ENCODE measurements at regions of chr19 and their contacts with region 1.

Region 1: GRCh38 chr19:506404-507285 is 652 bp upstream of the TPGS1 start:
- DNase-seq: peak; percentile 97 to 99
- H3K4me3 ChIP-seq: peak overlapping the region; percentile 74 to 93
- H3K27ac ChIP-seq: peak overlapping the region; percentile 92 to 93
- H3K4me1 ChIP-seq: peaks cover 0 to 9% of the 10 kb centered on the region in 2 donors
- H3K27me3 ChIP-seq: no peaks in the 10 kb centered on the region
- CTCF ChIP-seq: peak; percentile 96 to 97 (median 96)

Region 2: DNA sequence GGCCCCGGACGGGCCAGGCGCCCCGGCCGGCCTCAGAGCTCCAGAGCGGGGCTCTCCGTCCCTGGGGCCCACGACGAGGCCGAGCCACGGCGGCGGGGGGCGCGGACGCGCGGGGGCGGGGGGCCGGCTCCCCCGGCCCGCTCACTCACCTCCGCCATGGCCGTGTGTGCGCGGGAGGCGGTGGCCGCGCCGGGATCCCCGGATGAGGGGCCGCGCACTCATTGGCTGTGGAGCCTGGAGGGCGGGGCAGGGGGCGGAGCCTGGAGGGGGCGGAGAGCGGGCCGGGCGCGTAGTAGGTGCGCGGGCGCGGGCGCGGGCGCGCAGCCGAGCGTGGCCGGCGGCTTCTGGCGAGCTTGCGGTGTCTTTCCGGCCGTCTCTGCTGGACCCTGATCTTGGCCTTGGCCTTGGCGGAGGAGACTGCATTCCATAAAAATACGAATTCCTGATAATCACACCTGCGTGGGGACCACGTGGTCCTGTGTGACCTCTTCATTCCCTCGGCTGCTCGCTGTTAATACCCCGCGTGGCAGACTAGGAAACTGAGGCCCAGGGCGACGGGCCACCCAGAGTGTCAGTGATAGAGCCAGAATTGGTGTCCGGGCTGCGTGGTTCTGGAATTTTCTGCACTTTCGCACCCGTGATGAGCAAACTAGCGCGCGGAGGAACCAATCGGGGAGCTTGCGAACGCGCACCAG is 161.9 kb before region 1 on chr19 and contains the start of gene MIER2:
- intact Hi-C with region 1: loop called (anchors 10 kb)
- DNase-seq: peak; percentile 26 to 91
- H3K4me3 ChIP-seq: peak within 1 kb of the TSS; percentile 96 to 98
- H3K27ac ChIP-seq: peak within 1 kb of the TSS; percentile 58 to 76
- H3K4me1 ChIP-seq: peaks cover 5 to 22% of the 10 kb centered on the region in 2 donors
- H3K27me3 ChIP-seq: no peaks in the 10 kb centered on the region
- CTCF ChIP-seq: no peak
- total RNA-seq, gene MIER2: 128 TPM

Region 3: DNA sequence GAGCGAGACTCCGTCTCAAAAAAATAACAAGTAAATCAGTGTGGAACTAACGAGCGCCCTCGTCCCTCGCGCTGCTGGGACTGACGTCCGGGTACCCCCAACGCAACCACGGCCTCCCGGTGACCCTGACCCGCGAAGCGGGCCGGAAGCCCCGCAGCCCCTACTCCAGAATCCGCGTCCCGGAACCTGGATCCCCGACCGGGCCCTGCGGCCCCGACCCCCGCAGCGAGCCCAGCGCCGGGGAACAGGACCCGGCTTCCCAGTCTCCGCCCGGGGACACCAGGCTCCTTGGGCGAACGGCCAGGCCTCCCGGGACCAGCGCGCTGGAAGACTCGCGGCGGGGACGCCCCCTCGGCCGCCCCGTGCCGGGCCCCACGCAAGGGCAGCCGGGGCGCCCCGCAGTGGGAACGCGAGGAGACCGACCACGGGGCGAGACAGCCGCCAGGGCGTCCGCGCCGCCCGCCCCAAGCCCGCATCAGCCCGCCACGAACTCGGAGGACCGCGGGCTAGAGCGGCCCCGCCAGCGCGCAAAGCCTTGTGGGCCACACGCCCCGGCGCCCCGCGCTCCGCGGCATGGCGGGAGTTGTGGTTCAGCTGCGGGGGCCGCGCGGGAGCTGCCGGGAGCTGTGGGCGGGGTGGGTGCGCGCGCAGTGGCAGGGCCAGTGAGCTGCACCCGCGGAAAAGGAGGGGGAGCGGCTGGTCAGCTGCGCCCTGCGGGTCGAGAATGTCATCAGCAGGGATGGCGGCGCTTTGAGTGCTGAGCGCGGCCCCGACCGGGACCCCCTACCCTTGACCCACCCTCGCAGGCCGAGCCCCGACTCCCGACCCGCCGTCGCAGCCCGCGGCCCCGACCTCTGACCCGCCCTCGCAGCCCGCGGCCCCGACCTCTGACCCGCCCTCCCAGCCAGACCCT is 17.9 kb before region 1 on chr19:
- intact Hi-C with region 1: loop called (anchors 1 kb)
- DNase-seq: peak; percentile 66 to 96
- H3K4me3 ChIP-seq: peak overlapping the region; percentile 88 to 99
- H3K27ac ChIP-seq: peak overlapping the region; percentile 81 to 86
- H3K4me1 ChIP-seq: peaks cover 0 to 4% of the 10 kb centered on the region in 2 donors
- H3K27me3 ChIP-seq: no peaks in the 10 kb centered on the region
- CTCF ChIP-seq: peak in 1 of 3 experiments; percentile 3

Region 4: DNA sequence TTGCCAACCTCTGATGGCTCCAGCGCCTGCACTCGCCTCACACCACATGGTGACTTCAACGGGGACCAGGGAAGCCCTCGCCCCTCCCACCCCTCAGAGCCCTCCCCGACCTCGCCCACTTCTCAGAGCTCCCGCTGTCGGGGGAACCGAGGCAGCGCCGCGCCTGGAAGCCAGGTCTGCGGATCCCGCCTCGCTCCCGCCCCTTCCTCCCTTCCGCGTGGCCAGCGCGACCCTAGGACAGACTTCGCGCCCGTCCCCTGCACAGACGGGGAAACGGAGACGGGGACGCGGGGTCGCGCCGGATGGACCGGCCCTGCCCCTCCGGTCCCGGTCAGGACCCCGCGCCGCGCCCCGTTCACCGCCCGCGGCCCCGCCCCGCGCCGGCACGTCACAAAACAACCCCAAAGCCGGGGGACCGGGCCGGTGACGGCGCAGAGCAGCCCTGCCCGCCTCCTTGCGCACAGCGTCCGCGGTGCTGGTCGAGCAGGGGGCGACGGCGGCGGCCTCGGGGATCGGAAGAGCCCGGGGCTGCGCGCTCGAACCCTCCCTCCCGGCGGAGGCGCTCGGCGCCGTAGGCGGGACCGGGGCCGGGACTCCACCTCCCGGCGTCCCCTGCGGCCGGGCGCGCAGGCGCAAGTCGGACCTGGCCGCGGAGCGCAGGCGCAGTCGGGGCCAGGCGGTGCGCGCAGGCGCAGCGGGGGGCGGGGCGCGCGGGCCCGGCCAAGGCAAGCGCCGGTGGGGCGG is 24.5 kb after region 1 on chr19:
- intact Hi-C with region 1: loop called (anchors 1 kb)
- DNase-seq: peak in 1 of 2 donors; percentile 89
- H3K4me3 ChIP-seq: peak overlapping the region; percentile 91 to 99
- H3K27ac ChIP-seq: peak overlapping the region; percentile 88 to 95
- H3K4me1 ChIP-seq: peaks cover 16 to 24% of the 10 kb centered on the region in 2 donors
- H3K27me3 ChIP-seq: no peaks in the 10 kb centered on the region
- CTCF ChIP-seq: peak in 1 of 3 experiments; percentile 6

Region 5: DNA sequence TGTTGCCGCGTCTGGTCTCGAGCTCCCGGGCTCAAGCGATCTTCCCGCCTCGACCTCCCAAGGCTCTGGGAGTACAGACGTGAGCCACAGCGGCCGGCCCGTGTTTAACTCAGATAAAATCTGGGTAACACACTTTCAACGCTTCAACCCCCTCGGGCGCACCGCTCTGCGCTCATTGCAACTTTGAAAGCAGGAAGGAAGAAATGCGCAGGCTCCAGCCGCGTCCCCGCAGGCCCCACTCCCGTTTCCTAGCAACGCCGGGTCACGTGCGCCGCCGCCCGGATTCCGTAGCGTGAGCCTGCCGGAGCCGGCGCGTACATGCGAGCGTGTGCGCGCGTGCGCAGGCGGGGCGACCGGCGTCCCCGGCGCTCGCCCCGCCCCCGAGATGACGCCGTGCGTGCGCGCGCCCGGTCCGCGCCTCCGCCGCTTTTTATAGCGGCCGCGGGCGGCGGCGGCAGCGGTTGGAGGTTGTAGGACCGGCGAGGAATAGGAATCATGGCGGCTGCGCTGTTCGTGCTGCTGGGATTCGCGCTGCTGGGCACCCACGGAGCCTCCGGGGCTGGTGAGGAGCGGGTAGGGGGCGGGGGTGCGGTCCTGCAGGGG is 65.6 kb after region 1 on chr19 and contains the start of gene BSG:
- intact Hi-C with region 1: loop called (anchors 1 kb)
- DNase-seq: peak; percentile 86 to 98
- H3K4me3 ChIP-seq: peak within 1 kb of the TSS; percentile 72 to 100
- H3K27ac ChIP-seq: peak within 1 kb of the TSS; percentile 74 to 89
- H3K4me1 ChIP-seq: peaks cover 11 to 39% of the 10 kb centered on the region in 2 donors
- H3K27me3 ChIP-seq: no peaks in the 10 kb centered on the region
- CTCF ChIP-seq: peak in 1 of 3 experiments; percentile 18
- total RNA-seq, gene BSG: 647 TPM

Region 6: DNA sequence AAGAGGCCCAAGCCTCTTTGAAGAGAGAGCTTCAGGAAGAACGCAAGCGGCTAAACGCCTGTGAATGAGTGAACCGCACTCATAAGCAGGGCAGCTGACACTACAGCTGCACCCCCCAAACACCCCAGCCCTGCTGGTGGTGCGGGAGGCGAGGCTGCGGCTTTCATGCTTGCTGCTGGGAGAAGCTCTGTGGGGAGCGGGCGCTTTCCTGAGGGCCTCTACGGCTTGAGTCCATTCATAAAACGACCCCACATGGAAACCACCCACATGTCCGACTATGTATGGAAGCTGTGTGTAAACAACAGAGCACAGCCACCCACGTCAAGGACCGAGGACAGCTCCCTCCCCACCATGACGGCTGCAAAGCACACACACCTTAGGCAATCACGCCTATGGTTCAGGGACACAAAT is 1639.2 kb after region 1 on chr19:
- intact Hi-C with region 1: no loop called
- DNase-seq: no peak
- H3K4me3 ChIP-seq: no peak overlapping the region
- H3K27ac ChIP-seq: no peak overlapping the region
- H3K4me1 ChIP-seq: peaks cover 10 to 24% of the 10 kb centered on the region in 2 donors
- H3K27me3 ChIP-seq: no peaks in the 10 kb centered on the region
- CTCF ChIP-seq: no peak

Measured in ascending aorta (tissue), 2 donors.